ENCODE measurements at regions of chr22 and their contacts with region 1.

Region 1: DNA sequence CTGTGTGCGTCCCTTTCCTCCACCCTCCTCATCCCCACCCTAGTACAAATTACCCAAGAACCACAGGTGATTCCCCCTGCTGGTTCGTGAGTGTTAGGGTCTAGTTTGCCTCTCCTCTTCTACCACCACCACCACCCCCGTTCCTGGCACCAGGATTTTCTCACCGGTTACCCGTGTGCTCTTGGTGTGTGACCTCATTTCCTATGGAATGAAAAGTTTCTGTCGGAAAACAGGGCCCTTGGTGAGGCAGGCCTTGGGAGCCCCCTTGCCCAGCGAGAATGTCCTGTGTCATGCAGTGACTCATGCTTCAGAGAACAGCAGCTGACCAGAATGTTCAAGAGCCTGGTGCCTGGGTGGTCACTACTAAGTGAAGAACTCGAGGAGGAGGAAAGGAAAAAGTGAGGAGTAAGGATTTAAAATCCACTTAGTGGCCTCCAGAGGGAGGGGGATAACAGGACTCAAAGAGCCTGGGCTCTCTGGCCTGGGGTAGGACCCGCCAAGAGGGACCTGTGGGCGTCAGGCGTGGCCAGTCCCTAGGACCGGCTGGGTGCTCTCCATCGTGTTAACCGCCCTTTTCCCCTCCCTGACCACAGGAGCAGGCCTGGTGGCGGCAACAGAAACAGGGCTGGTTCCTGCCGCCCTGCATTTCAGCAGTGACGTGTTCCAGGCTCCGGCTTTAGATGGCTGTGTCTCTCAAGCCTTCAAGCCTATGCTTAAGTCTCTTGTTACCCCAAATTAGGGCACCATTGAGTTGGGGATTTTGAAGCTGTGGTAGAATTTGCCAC is 30.2 kb downstream of the C22orf31 start:
- DNase-seq: peak; percentile 68 to 70
- ATAC-seq: peak; percentile 88 to 91 (median 90)
- H3K4me3 ChIP-seq: peak overlapping the region; percentile 64
- H3K27ac ChIP-seq: peak overlapping the region; percentile 87
- H3K4me1 ChIP-seq: peaks cover 39% of the 10 kb centered on the region
- H3K27me3 ChIP-seq: no peaks in the 10 kb centered on the region
- CTCF ChIP-seq: peak; percentile 14

Region 2: GRCh38 chr22:28600546-28601143 is 430.8 kb before region 1 on chr22:
- intact Hi-C with region 1: loop called in 1 of 2 experiments (anchors 10 kb)
- DNase-seq: no peak
- ATAC-seq: peak in 2 of 4 donors; percentile 50 to 68
- H3K4me3 ChIP-seq: no peak overlapping the region
- H3K27ac ChIP-seq: no peak overlapping the region
- H3K4me1 ChIP-seq: no peaks in the 10 kb centered on the region
- H3K27me3 ChIP-seq: no peaks in the 10 kb centered on the region
- CTCF ChIP-seq: peak; percentile 63

Region 3: DNA sequence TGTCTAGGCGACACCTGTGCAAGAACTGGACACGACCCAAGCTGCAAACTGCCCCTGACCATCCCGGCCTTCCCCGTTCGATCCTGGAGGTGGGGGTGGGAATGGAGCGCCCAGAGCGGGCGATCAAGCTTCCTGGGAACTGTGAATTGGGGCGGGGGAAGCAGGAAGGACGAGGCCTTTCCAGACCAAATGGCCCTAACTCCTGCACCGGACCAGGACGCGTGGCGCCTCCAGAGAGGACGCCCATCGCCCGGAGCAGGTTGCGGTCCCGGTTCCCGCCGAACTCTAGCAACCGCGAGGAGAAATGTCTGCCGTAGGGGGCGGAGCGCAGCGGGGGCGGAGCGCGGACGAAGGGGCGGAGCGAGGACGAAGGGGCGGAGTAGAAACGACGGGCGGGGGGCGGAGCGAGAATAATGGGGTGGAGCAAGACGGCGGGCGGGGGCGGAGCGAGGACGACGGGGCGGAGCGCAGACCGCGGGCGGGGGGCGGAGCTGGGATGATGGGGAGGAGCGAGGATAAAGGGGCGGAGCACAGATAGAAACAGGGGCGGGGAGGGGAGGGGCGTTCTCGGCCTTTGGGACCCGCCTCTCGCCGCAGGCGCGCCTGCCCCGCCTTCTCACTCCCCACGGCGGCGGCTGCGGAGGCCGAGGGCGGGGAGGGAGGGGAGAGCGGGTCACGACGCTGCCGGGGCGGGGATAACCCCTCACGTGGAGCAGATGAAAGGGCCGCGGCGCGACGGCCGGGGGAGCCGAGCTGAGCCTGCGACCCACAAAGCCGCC is 148.4 kb before region 1 on chr22 and contains the start of gene ZNRF3:
- intact Hi-C with region 1: loop called in 1 of 2 experiments (anchors 10 kb)
- DNase-seq: peak; percentile 94 to 96
- ATAC-seq: peak; percentile 95 to 97 (median 96)
- H3K4me3 ChIP-seq: peak within 1 kb of the TSS; percentile 81
- H3K27ac ChIP-seq: peak within 1 kb of the TSS; percentile 83
- H3K4me1 ChIP-seq: peaks cover 29% of the 10 kb centered on the region
- H3K27me3 ChIP-seq: no peaks in the 10 kb centered on the region
- CTCF ChIP-seq: no peak
- total RNA-seq, gene ZNRF3: 4.9 to 8.5 (median 7.4) TPM

Region 4: GRCh38 chr22:28917747-28918549 is 113.5 kb before region 1 on chr22:
- intact Hi-C with region 1: loop called in 1 of 2 experiments (anchors 2 kb)
- DNase-seq: no peak
- ATAC-seq: peak; percentile 71 to 81 (median 74)
- H3K4me3 ChIP-seq: peak overlapping the region; percentile 28
- H3K27ac ChIP-seq: peak overlapping the region; percentile 74
- H3K4me1 ChIP-seq: peaks cover 25% of the 10 kb centered on the region
- H3K27me3 ChIP-seq: no peaks in the 10 kb centered on the region
- CTCF ChIP-seq: no peak